Heart left ventricle (tissue), 16 donors: ENCODE measurements at regions of chr1 and their contacts with region 1.

Region 1: DNA sequence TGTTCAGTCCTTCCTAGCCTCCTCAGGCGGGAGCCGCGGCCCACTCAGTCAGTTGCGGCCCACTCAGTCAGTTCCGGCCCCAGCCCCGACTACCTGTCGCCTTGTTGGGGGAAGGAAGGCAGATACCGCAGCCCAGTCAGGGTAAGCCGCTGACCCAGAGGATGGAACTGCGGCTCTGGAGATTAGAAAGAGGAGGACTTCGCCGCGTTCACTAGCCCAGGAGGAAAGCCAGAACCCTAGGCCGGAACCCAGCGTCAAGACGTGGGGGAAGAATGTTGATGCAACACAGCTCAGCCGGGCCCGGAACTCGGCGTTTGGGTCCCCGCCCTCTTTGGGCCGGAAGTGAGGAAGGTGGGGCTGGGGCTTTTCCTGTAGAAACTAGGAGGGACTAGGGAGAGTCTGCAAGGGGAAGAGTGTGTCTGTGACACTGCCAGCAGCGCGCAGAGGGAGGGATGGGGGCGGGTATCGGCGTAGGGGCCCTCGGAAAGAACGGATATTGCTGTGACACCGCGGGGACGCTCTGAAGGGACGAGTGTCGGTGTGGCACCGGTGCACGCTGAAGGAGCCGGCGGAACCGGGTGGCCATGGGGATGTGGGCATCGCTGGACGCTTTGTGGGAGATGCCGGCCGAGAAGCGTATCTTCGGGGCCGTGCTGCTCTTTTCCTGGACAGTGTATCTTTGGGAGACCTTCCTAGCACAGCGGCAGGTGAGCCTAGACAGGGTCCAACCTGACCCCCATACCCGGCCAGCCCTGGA is at the start of gene ZMPSTE24:
- DNase-seq: peak; percentile 96 to 97 (median 96)
- ATAC-seq: peak; percentile 99 to 100 (median 99)
- H3K4me3 ChIP-seq: peak within 1 kb of the TSS; percentile 72 to 98 (median 90)
- H3K27ac ChIP-seq: peak within 1 kb of the TSS; percentile 86 to 98 (median 94)
- H3K4me1 ChIP-seq: peaks cover 3 to 55% (median 37%) of the 10 kb centered on the region in 12 donors
- H3K27me3 ChIP-seq: no peaks in the 10 kb centered on the region
- CTCF ChIP-seq: peak in 2 of 12 donors; percentile 14 to 19
- POLR2A ChIP-seq: peak in 1 of 2 donors; percentile 63
- total RNA-seq, gene ZMPSTE24: 26.6 to 43.4 (median 31.7) TPM

Region 2: DNA sequence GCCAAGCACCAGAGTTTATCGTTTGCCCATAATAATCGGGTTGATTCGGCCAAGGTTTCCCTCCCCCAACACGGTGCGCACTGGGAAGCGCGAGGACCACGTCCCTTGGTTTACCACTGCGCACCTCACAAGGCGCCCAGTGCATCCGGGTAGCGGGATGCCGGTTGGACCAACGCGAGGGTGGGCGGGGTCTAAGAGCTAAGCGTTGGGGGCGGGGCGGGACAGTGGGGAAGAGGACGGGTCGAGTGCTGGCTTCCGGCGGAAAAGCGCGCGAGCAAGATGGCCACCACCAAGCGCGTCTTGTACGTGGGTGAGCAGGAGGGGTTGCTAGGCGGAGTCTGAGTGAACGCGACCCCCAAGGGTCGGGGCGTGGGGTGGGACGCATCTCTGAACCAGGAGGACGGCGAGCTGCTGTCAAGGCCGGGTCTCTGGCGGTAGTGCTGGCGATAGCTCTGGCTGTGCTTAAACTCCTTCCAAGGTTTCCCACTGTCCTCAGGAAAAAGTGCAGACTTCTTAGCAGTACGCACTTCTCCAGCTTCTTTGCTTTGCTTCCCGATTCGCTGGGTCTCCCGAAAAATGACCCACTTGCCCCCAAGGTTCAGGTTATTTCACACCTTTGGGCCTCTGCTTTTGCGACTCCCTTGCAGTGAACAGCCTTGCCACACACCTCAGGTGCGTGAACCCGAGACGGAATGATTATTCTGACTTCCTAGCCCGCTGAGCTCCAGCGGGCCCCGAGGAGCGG is 519.1 kb before region 1 on chr1 and contains the start of gene PPIE:
- intact Hi-C with region 1: no loop called
- DNase-seq: peak; percentile 94 to 97 (median 95)
- ATAC-seq: peak; percentile 96 to 99 (median 99)
- H3K4me3 ChIP-seq: peak within 1 kb of the TSS; percentile 57 to 91 (median 78)
- H3K27ac ChIP-seq: peak within 1 kb of the TSS in 11 of 12 donors; percentile 7 to 84 (median 72)
- H3K4me1 ChIP-seq: peaks cover 0 to 17% (median 14%) of the 10 kb centered on the region in 12 donors
- H3K27me3 ChIP-seq: peaks cover 0 to 16% (median 2%) of the 10 kb centered on the region in 9 donors
- CTCF ChIP-seq: no peak
- POLR2A ChIP-seq: peak in 1 of 2 donors; percentile 17
- total RNA-seq, gene PPIE: 22.2 to 33.3 (median 27.9) TPM

Region 3: GRCh38 chr1:40161125-40161887 is 96.6 kb before region 1 on chr1 and contains the start of gene RLF:
- intact Hi-C with region 1: loop called in 7 of 10 experiments (anchors 2 to 10 kb)
- DNase-seq: peak; percentile 95 to 97 (median 96)
- ATAC-seq: peak; percentile 99 to 100 (median 100)
- H3K4me3 ChIP-seq: peak within 1 kb of the TSS; percentile 56 to 97 (median 86)
- H3K27ac ChIP-seq: peak within 1 kb of the TSS; percentile 84 to 97 (median 92)
- H3K4me1 ChIP-seq: peaks cover 13 to 44% (median 33%) of the 10 kb centered on the region in 12 donors
- H3K27me3 ChIP-seq: no peaks in the 10 kb centered on the region
- CTCF ChIP-seq: no peak
- POLR2A ChIP-seq: peak; percentile 60 to 87
- total RNA-seq, gene RLF: 9.1 to 14.5 (median 12.3) TPM

Region 4: DNA sequence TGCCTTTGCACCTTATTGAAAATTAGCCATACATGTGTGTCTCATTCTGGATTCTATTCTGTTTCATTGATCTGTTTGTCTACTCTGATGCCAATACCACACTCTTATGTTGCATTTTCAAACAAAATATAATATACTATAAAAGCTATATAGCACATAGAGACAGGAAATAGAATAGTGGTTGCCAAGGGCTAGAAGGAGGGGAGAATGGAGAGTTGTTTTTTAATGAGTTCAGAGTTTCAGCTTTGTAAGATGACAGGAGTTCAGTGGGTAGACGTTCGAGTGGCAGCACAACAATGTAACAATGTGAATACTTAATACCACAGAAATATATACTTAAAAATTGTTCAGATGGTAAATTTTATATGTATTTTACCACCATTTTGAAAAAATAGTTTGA is 79.7 kb before region 1 on chr1:
- intact Hi-C with region 1: no loop called
- DNase-seq: no peak
- ATAC-seq: no peak
- H3K4me3 ChIP-seq: no peak overlapping the region
- H3K27ac ChIP-seq: no peak overlapping the region
- H3K4me1 ChIP-seq: peaks cover 0 to 42% (median 17%) of the 10 kb centered on the region in 12 donors
- H3K27me3 ChIP-seq: no peaks in the 10 kb centered on the region
- CTCF ChIP-seq: no peak
- POLR2A ChIP-seq: no peak

Region 5: DNA sequence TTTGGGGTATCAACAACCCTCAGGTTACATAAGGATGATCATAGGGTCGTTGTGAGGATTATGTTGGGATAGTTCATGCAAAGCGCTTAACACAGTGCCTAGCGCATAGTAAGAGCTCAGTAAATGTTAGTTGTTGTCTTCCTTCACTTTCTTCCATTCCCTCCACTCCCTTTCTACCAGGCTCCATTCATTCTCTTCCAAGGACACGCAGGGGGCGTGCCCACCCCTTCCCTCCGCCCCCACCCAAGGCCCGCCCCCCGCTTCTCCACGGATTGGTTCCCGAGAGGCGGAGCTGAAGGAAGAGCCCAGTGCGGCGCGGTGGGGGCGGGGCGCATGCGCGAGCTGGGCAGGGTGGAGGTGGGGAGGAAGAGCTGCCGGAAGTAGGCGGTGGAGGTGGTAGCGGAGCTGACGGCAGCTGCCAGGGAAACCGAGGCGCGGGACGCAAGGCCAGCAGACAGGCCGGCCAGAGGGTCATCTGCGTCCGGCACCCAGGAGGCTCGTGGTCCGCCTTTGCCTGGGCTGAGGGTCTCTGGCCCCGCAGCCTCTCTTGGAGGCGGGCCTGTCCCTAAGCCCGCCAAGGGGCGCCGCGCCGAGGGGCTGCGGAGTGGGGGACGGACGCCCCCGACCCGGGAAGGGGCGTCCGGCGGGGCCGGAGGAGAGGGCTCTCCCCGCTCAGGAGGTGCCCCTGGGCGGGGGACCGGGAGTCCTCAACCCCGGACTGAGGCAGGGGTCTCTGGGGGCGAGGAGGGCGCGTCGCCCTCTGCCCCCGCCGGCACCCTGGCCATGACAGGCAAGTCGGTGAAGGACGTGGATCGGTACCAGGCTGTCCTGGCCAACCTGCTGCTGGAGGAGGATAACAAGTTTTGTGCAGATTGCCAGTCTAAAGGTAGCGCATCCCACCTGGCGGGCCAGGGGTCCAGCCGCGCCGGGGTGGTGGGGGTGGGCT is 115.7 kb after region 1 on chr1 and contains the start of gene SMAP2:
- intact Hi-C with region 1: loop called in 1 of 10 experiments (anchors 5 kb)
- DNase-seq: peak; percentile 96 to 98 (median 97)
- ATAC-seq: peak; percentile 99 to 100 (median 99)
- H3K4me3 ChIP-seq: peak within 1 kb of the TSS; percentile 65 to 100 (median 82)
- H3K27ac ChIP-seq: peak within 1 kb of the TSS; percentile 59 to 99 (median 85)
- H3K4me1 ChIP-seq: peaks cover 0 to 44% (median 12%) of the 10 kb centered on the region in 12 donors
- H3K27me3 ChIP-seq: no peaks in the 10 kb centered on the region
- CTCF ChIP-seq: no peak
- POLR2A ChIP-seq: peak in 1 of 2 donors; percentile 65
- total RNA-seq, gene SMAP2: 9.9 to 44.4 (median 12.9) TPM

Region 6: DNA sequence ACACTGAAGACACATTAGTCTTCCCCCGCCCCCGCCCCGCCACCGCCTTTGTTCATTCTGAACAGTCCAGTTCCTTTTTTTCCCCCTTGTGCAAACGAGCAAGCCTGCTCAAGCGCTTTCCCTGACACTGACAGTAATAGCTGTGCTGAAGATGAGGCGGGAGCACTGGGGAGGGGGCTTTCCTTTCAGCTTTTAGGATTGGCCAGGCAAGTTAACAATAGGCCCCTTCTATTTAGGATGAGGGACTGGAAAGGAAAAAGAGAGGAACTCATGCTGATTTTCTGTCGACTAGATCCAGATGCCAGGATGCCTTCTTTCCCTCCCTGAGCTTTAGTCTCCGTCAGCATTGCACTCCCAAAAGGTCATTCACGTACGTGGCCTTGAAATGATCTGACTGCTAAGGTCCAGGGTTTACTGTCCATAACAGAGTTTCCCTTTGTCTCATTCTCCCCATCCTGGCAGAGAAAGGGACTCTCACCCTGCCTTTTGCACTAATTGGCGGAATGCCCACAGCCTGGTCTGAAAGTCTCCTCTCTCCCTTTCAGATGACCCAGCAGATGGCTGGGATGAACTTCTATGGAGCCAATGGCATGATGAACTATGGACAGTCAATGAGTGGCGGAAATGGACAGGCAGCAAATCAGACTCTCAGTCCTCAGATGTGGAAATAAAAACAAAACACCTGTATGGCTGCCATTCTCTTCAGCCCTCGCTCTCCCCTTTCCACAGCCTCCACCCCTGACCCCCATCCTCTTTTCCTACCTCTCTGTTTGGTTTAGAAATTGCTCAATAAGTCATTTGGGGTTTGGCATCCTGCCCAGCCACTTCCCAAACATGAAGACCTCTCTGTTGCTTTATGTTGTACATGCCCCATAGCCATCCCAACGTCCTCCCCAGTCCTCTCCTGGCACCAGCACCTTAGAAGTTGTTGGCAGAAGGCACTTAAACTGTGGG is 163.8 kb after region 1 on chr1:
- intact Hi-C with region 1: no loop called
- DNase-seq: peak in 1 of 5 donors; percentile 31
- ATAC-seq: peak; percentile 5 to 21 (median 12)
- H3K4me3 ChIP-seq: no peak overlapping the region
- H3K27ac ChIP-seq: peak overlapping the region in 1 of 12 donors; percentile 71
- H3K4me1 ChIP-seq: peaks cover 0 to 34% (median 10%) of the 10 kb centered on the region in 12 donors
- H3K27me3 ChIP-seq: no peaks in the 10 kb centered on the region
- CTCF ChIP-seq: no peak
- POLR2A ChIP-seq: no peak